Right ventricle myocardium superior (tissue), 1 donor: ENCODE measurements at regions of chr6 and their contacts with region 1.

Region 1: DNA sequence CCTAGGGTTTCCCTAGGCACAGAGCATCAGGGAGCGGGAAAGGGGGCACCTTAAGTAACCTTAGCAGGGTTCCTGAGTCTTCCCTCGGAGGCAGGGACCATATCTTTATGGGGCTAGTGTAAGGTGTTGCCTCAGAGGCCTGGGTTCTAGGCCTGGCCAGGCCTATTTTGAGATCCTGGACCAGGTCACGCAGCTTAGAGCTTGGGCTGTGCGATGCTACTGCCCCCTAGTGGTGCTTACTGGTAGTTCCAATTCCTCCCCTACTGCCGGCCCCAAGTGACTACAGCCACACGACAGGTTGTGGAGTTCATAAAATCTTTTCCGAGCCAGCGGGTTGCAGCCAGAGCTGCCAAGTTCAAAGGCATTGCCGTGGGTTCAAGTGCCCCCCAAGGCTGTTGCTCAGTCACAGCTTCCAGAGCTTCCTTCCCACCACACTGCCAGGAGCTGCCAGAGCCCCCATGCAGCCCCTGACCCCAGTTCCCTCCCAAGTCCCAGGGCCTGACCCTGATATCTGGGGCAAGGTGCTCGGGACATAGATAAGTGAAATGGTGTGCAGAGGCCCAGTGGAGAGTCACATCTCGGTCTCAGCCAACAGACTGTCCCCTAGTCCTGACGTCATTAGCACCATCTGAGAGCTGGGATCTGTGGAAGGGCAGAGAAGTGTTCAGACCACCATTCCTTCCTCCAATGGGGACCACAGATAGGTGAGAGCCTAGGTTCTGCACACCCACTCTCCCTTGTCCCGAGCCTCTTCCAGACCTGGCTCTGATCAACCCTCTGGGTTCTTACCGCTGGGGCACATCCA is 3.3 kb downstream of the LRRC73 start:
- DNase-seq: peak; percentile 75
- ATAC-seq: peak; percentile 55

Region 2: DNA sequence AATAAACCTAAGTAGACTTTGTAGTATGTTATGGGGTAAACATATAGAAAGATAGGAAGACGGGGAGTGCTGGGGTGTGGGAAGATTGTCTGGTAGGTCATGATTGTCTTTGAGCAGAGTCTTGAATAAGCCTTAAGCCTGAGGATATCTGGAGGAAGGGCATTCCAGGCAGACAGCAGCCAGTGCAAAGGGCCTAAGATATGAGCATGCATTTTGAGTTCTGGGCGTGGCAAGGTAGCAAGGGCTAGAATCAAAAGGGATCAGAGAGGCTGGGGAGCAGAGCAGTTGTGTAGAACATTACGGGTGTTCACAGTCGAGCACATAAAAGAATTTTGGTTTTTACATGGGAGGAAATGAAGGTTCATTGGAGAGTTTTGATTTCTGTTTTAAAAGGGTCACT is 710.7 kb before region 1 on chr6:
- intact Hi-C with region 1: no loop called
- DNase-seq: no peak
- ATAC-seq: no peak

Region 3: GRCh38 chr6:43286980-43287716 is 219.7 kb before region 1 on chr6:
- intact Hi-C with region 1: no loop called
- DNase-seq: no peak
- ATAC-seq: no peak

Region 4: DNA sequence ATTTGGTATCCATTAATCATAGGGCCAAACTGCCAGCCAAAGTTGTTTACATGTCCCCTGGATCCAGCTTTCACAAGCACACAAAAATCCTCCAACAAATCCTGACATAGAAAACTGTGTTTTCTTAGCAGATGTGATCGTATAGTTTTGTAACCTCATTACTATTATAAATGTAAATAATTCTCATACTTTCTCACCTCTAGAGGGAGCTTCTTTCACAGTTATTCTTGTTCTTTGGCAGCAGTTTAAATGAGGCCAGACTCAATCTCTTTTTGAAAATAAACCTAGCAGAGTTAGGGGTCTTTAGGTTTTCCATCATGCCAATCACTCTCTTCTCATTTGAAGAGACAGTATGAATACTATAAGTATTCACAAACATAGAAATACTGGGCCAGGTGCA is 120.4 kb before region 1 on chr6:
- intact Hi-C with region 1: loop called (anchors 5 kb)
- DNase-seq: no peak
- ATAC-seq: no peak

Region 5: DNA sequence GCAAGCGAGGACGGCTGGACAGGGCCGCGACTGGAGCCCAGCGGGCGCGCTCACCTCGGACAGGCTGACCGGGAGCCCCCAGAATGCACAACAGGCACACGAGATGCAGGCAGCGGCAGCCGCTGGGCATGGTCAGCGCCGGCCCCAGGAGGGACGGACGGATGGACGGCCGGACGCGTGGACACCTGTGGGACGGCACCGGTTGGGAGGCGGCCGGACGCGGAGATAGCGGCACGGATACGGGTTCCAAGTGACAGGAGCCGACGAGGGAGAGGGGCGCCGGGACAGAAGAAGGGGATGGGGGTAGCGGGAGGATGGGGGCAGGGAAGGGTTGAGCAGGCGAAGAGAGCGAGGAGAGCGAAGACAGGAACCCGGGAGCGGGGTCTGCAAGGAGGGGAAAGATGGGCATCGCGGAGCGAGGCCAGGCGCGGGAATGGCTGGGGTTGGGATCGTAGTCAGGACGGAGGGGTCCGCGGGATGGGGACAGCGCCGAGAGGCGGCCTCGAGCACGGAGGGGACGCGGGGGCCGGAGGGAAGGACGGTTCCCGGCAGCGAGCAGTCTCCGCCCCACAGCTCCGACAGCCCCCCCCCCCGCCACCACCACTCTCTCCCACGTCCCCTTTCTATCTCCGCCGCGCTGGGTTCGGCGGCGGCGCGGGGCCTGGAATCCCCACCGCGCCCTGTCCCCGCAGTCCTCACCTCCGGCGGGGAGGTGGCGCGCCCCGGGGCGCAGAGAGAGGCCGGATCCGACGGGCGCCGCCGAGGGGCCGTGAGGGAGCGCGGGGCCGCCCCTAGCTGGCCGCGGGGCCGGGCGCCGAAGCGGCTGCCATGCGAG is 52.0 kb before region 1 on chr6:
- intact Hi-C with region 1: loop called (anchors 1 kb)
- DNase-seq: peak; percentile 93
- ATAC-seq: peak; percentile 95